PC-3 (cell line): ENCODE measurements at regions of chr5 and their contacts with region 1.

Region 1: GRCh38 chr5:157948738-157949410 is 89.9 kb upstream of the CLINT1 start:
- DNase-seq: peak; percentile 99
- ATAC-seq: peak; percentile 99
- H3K4me3 ChIP-seq: peak overlapping the region; percentile 35
- H3K27ac ChIP-seq: no peak overlapping the region
- H3K4me1 ChIP-seq: peaks cover 8% of the 10 kb centered on the region
- H3K27me3 ChIP-seq: peaks cover 6% of the 10 kb centered on the region; the same call in 1 of the 2 replicates
- CTCF ChIP-seq: peak; percentile 99

Region 2: GRCh38 chr5:157820593-157821252 is 128.2 kb before region 1 on chr5:
- CTCF ChIA-PET with region 1: interaction called, 3 read pairs
- POLR2A ChIA-PET with region 1: no interaction called
- intact Hi-C with region 1: loop called (anchors 1 kb)
- DNase-seq: peak; percentile 78
- ATAC-seq: peak; percentile 80
- H3K4me3 ChIP-seq: no peak overlapping the region
- H3K27ac ChIP-seq: no peak overlapping the region
- H3K4me1 ChIP-seq: peaks cover 6% of the 10 kb centered on the region
- H3K27me3 ChIP-seq: no peaks in the 10 kb centered on the region
- CTCF ChIP-seq: peak; percentile 92

Region 3: DNA sequence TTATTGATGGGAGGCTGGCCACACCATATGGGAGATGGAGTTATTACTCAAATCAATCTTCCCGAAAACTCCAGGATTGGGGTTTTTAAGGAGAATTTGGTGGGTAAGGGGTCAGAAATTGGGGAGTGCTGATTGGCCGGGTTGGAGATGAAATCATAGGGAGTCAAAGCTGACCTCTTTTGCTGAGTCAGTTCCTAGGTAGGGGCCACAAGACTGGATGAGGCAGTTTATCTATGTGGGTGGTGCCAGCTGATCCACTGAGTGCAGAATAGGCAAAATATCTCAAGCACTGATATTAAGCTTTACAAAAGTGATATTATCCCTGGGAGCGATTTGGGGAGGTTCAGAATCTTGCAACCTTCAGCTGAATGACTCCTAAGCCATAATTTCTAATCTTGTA is 14.3 kb before region 1 on chr5:
- CTCF ChIA-PET with region 1: interaction called, 14 read pairs
- POLR2A ChIA-PET with region 1: interaction called, 10 read pairs
- intact Hi-C with region 1: no loop called
- DNase-seq: no peak
- ATAC-seq: no peak
- H3K4me3 ChIP-seq: no peak overlapping the region
- H3K27ac ChIP-seq: no peak overlapping the region
- H3K4me1 ChIP-seq: no peaks in the 10 kb centered on the region
- H3K27me3 ChIP-seq: no peaks in the 10 kb centered on the region
- CTCF ChIP-seq: no peak

Region 4: DNA sequence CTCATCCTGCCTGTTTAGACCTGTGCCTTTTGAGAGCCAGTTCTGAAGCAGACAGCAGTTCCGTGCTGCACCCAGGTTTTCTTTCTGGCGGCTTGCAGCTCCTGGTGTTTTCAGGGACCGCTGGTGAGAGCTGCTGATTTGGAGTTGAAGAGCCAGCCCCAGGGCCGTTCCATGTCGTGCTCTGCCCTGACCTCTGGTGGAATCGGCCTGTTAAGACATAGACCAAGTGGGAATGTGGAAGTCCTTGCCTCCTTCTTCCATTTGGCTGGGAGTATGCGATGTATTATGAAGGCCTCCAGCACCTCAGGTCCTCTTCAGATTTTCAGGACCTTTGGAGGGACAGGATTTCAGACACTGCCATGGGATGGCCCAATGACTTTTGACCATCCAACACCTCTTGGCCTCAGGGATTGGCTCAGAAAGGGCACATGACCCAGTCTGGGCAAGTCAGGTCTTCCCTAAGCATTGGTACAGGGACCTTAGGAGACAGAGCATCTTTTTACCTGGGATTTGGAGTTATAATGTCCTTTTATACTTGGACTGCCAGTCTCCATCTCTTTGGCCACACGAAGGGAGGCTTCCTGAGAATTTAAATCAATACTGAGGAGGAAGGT is 46.1 kb after region 1 on chr5:
- CTCF ChIA-PET with region 1: interaction called, 6 read pairs
- POLR2A ChIA-PET with region 1: no interaction called
- intact Hi-C with region 1: loop called (anchors 2 kb)
- DNase-seq: peak; percentile 89
- ATAC-seq: peak; percentile 80
- H3K4me3 ChIP-seq: no peak overlapping the region
- H3K27ac ChIP-seq: no peak overlapping the region
- H3K4me1 ChIP-seq: peaks cover 28% of the 10 kb centered on the region
- H3K27me3 ChIP-seq: peaks cover 10% of the 10 kb centered on the region
- CTCF ChIP-seq: peak; percentile 96

Region 5: GRCh38 chr5:158039911-158040347 is 91.1 kb after region 1 on chr5:
- CTCF ChIA-PET with region 1: no interaction called
- POLR2A ChIA-PET with region 1: no interaction called
- intact Hi-C with region 1: no loop called
- DNase-seq: peak; percentile 39
- ATAC-seq: peak; percentile 37; the same call in 1 of the 2 replicates
- H3K4me3 ChIP-seq: no peak overlapping the region
- H3K27ac ChIP-seq: no peak overlapping the region
- H3K4me1 ChIP-seq: no peaks in the 10 kb centered on the region
- H3K27me3 ChIP-seq: no peaks in the 10 kb centered on the region
- CTCF ChIP-seq: no peak